ENCODE measurements at regions of chr7 and their contacts with region 1.

Region 1: DNA sequence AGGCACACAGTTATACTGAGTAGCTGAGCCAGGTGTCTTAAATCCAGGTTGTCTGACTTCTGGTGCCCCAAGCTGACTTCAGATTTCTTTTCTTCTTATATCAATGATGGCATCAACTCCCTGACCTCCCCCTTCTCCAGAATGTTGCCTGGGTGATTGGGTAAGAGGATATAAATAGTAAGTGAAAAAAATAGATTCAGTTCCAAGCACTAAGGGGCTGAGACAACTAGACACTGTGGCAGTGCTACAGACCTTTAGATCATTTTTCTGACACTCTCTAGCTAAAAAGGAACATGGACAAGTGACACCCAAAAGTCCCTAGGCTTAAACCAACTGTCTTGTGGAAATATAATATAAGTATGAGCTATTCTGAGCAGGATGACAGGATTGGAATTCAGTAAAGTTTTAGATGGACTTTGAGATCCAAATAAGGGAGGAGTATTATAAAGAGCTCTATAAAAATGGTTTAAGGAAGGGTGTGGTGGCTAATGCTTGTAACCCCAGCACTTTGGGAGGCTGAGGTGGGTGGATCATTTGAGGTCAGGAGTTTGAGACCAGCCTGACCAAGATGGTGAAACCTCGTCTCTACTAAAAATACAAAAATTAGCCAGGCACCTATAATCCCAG is 589.1 kb upstream of the GALNT17 start:
- DNase-seq: no peak
- H3K4me3 ChIP-seq: no peak overlapping the region
- CTCF ChIP-seq: no peak

Region 2: DNA sequence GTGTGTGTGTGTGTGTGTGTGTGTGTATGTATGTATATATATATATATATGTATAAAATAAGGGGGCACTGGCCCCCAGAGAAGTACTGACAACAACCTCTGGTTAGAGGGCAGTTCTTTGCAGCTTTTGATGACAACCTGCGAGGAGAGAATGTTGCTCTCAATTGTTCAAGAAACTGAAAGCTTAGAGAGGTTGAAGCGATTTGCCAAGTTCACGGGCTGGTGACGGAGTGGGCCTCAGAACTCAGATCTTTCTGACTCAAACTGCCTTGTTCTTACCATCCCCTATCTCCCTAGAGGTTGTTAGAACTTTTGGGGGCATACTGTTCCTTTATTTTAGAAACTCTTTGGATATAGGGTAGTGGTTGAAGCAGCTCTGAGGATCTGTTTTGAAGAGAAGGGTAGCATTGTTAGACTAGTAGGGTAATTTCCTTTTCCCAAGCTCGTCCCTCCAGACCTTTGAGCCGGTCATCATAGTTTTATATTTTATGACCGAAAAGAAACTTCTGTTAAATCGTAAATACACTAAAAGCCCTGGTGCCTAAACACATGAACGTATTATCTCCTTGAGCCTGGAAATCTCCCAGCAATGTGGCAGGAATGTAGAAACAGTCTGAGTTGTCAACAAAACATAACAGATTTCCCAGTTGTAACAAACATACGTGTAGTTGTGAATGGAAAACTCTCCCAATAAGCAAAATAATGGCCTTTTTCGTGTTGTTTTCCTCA is 47.4 kb after region 1 on chr7:
- in situ Hi-C with region 1: loop called (anchors 5 kb)
- DNase-seq: no peak
- H3K4me3 ChIP-seq: no peak overlapping the region
- CTCF ChIP-seq: no peak

Region 3: DNA sequence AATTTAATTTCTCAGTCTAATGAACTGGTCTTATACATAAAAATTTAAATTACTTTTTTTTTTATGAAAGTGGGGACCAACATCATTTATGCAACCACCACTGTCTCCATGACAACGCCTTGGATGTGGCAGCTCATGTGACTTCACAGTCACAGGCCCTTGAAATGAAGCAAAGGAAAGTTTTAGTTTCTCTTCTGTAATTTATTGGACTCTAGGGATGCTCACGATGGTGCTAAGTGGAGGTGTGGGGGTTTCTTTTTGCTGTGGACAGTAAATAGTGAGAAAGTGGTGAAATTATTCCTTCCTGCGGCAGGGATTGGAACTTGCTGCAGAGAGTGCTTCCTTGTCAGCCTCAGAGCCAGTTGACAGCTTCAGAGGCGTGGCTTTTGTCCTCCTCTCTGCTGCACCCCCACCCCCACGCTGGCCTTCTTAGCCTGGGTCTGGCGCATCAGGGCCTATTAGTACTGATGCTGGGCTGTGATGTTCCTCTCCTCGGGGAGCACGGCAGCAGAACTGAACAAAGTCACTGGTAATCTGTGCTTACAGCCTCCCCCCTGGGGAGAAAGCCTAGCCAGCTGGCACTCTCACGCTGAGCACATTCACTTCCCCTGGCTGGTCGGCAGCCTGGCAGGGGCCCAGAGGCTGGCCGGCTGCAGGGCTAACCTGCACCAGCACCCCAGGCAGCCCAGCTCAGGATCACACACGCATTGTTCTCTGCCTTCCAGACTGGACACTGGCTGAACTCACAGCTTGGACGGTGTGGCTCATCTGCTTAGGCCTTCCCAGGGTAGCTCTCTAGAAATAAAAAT is 71.6 kb after region 1 on chr7:
- in situ Hi-C with region 1: no loop called
- DNase-seq: peak; percentile 33
- H3K4me3 ChIP-seq: no peak overlapping the region
- CTCF ChIP-seq: no peak